H1 (cell line): ENCODE measurements at regions of chr3 and their contacts with region 1.

Region 1: DNA sequence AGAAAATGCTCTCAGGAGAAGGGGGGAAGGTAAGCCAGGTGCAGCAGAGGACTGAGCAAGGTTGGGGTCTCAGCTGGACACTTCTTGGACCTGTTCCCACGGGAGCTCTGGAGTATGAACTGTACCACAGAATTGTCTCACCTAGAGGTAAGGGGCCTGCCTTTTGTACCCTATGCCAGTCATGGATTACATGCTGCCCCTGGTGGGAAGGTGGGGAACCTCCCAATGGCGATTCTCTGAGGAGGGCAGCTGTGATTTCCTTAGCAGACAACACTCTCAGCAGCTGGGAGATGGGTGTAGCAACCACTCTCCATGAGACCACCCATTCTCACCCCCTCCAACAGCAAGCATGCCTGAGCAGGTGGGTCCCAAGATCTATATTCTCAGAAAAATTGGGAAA is 329.4 kb upstream of the CTNNB1 start:
- DNase-seq: peak in 1 of 2 experiments; percentile 51
- H3K4me3 ChIP-seq: no peak overlapping the region
- H3K27ac ChIP-seq: no peak overlapping the region
- H3K4me1 ChIP-seq: no peaks in the 10 kb centered on the region
- H3K27me3 ChIP-seq: no peaks in the 10 kb centered on the region
- CTCF ChIP-seq: peak; percentile 46 to 63 (median 54)
- EP300 ChIP-seq: no peak
- POLR2A ChIP-seq: no peak
- RAD21 ChIP-seq: peak; percentile 39 to 55

Region 2: GRCh38 chr3:40745381-40746106 is 124.4 kb before region 1 on chr3:
- CTCF ChIA-PET with region 1: no interaction called
- POLR2A ChIA-PET with region 1: no interaction called
- DNase-seq: no peak
- H3K4me3 ChIP-seq: no peak overlapping the region
- H3K27ac ChIP-seq: no peak overlapping the region
- H3K4me1 ChIP-seq: peaks cover 0 to 8% (median 0%) of the 10 kb centered on the region in 4 experiments; a peak in 1 of 7 replicates
- H3K27me3 ChIP-seq: peaks cover 0 to 2% (median 0%) of the 10 kb centered on the region in 4 experiments; a peak in 1 of 7 replicates
- CTCF ChIP-seq: no peak
- EP300 ChIP-seq: no peak
- POLR2A ChIP-seq: no peak
- RAD21 ChIP-seq: no peak

Region 3: DNA sequence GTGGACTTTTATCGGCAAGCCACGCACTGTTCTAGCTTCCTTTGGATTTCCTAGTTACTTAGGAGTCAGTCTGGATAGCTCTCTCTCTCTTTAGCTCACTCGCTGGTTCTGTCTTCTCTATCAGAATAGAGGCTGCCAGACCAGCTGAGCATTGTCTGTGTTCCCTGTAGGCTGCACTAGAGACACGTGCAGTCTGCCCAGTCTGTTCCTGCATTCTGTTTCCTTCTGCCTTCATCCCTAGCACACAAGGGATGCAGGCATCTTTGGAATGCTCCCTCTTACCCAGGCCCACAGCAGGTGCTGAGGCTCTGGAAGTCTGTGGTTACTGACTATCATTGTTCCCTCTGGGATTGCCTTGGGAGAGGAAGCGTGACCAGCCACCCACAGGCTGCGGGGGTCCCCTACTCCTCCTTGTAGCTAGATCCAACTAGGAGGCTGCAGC is 22.4 kb before region 1 on chr3:
- CTCF ChIA-PET with region 1: interaction called, 12 read pairs
- POLR2A ChIA-PET with region 1: no interaction called
- DNase-seq: peak in 1 of 2 experiments; percentile 72
- H3K4me3 ChIP-seq: no peak overlapping the region
- H3K27ac ChIP-seq: peak overlapping the region; percentile 27; the same call in 1 of the 2 replicates
- H3K4me1 ChIP-seq: peaks cover 6 to 10% (median 8%) of the 10 kb centered on the region in 4 experiments; a peak in 6 of 7 replicates
- H3K27me3 ChIP-seq: no peaks in the 10 kb centered on the region
- CTCF ChIP-seq: peak; percentile 31 to 45 (median 32)
- EP300 ChIP-seq: peak in 1 of 2 experiments; percentile 75; a peak in 1 of 3 replicates
- POLR2A ChIP-seq: no peak
- RAD21 ChIP-seq: peak; percentile 66 to 76

Region 4: DNA sequence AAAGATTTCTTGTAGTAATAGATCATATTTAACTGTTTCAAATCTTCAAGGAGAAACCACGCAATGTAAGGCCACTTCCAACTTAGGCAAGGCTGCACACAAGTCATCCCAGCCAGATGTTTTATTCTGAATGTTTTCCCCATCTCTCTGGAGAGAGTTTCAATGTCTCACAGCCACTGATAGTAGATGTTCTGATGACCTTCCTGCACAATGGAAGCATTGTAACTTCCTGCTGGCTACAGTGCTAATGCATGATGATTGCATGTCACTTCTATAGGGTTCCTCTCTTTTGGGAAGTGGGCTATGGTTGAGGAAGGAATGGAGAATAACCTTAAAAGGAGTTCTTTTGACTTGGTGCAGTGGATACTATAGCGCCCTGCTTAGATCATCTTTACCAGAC is 17.2 kb before region 1 on chr3:
- CTCF ChIA-PET with region 1: interaction called, 18 read pairs
- POLR2A ChIA-PET with region 1: no interaction called
- DNase-seq: no peak
- H3K4me3 ChIP-seq: no peak overlapping the region
- H3K27ac ChIP-seq: no peak overlapping the region
- H3K4me1 ChIP-seq: peaks cover 0 to 7% (median 2%) of the 10 kb centered on the region in 4 experiments; a peak in 3 of 7 replicates
- H3K27me3 ChIP-seq: no peaks in the 10 kb centered on the region
- CTCF ChIP-seq: no peak
- EP300 ChIP-seq: no peak
- POLR2A ChIP-seq: no peak
- RAD21 ChIP-seq: no peak